WTC11 (cell line): ENCODE measurements at regions of chr7 and their contacts with region 1.

Region 1: DNA sequence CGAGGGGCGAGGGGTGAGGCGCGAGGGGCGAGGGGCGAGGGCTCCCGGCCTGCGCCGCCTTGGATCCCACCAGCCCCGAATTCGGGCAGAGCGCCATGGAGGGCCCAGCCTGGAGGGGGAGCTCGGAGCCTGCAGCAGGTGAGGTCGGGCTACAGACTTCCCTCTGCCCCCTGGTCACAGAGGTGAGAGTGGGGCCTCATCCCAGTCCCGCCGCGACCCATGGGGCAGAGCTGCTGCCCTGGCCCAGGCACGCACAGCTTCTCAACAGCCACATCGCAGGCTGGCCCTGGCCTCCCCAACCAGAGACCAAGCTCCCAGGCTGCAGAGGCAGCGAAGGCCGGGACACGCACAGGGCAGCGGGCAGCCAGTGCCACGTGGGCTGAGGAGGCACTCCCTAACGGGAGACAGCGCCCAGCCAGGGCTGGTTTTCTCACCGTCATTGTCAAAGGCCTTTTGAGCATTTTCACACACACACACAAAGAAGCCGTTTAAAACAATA is 191.8 kb downstream of the PTPRN2 start:
- DNase-seq: peak; percentile 75
- ATAC-seq: peak; percentile 85
- H3K4me3 Mint-ChIP-seq: no peak overlapping the region
- H3K27ac Mint-ChIP-seq: no peak overlapping the region
- H3K4me1 Mint-ChIP-seq: peaks cover 34% of the 10 kb centered on the region
- H3K27me3 Mint-ChIP-seq: no peaks in the 10 kb centered on the region
- CTCF ChIP-seq: no peak

Region 2: GRCh38 chr7:158353606-158354570 is 41.9 kb before region 1 on chr7:
- CTCF ChIA-PET with region 1: interaction called, 10 read pairs
- POLR2A ChIA-PET with region 1: no interaction called
- DNase-seq: peak; percentile 64
- ATAC-seq: peak; percentile 50
- H3K4me3 Mint-ChIP-seq: no peak overlapping the region
- H3K27ac Mint-ChIP-seq: no peak overlapping the region
- H3K4me1 Mint-ChIP-seq: peaks cover 32% of the 10 kb centered on the region
- H3K27me3 Mint-ChIP-seq: peaks cover 50% of the 10 kb centered on the region
- CTCF ChIP-seq: peak; percentile 69

Region 3: DNA sequence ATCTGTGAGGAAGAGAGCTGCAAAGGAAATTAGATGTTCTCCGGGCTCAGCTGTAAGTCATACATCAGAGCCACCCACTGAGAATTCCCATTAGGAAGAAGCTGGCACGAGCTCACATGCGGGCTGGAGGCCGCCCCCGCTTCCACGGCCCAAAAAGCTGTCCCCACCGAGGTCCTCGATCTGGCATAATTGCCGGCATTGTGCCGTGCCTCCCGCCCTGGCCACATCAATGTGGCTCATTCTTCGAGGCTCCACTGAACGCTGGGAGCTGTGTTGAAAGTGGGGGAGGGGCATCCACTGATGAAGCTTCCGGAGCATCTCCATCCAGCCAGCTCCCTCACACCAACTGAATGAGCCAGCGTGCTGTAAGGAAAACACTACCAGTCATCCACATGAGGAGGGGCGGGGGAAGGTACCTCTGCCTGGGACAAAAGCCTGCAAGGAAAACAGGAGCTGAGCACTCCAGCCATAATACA is 18.7 kb after region 1 on chr7:
- CTCF ChIA-PET with region 1: interaction called, 13 read pairs
- POLR2A ChIA-PET with region 1: no interaction called
- DNase-seq: no peak
- ATAC-seq: no peak
- H3K4me3 Mint-ChIP-seq: no peak overlapping the region
- H3K27ac Mint-ChIP-seq: no peak overlapping the region
- H3K4me1 Mint-ChIP-seq: peaks cover 9% of the 10 kb centered on the region
- H3K27me3 Mint-ChIP-seq: no peaks in the 10 kb centered on the region
- CTCF ChIP-seq: no peak